ENCODE measurements at regions of chr5 and their contacts with region 1.

Region 1: DNA sequence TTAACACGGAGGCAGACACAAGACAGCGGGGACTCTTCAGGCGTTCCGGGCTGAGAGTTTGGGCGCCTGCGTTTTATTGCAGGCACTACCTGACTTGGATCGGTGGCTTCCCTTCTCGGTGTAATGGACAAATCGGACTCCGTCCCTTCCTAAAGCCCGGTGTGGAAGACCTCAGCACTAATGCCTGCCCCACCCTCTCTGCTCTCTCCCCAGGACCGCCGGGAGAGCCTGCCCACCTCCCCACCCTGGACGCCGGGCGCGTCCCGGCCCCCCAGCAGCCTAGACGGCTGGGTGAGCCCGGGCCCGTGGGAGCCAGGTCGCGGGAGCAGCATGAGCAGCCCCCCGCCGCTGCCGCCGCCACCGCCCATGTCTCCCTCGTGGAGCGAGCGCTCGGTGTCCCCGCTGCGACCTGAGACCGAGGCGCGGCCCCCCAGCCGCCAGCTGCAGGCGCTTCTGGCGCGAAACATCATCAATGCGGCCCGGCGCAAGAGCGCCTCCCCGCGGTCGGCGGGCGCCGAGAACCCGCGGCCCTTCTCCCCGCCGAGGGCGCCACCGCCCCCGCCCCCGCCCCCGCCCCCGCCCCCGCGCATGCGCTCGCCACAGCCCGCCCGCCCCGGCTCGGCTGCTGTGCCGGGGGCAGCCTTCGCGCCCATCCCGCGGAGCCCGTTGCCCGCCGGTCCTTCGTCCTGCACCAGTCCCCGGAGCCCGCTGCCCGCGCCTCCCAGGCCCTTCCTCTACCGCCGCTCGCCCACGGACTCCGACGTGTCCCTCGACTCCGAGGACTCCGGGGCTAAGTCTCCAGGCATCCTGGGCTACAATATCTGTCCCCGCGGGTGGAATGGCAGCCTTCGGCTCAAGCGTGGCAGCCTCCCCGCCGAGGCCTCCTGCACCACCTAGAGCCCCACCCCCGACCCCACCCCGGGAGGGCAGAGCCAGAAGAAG is 4.6 kb upstream of the MYOZ3 start:
- DNase-seq: peak; percentile 74 to 87
- ATAC-seq: peak; percentile 50 to 77 (median 56)
- H3K4me3 ChIP-seq: peak overlapping the region; percentile 10 to 64 (median 51)
- H3K27ac ChIP-seq: peak overlapping the region; percentile 79 to 100 (median 92)
- H3K4me1 ChIP-seq: peaks cover 21 to 94% (median 56%) of the 10 kb centered on the region in 9 donors
- H3K27me3 ChIP-seq: no peaks in the 10 kb centered on the region
- CTCF ChIP-seq: peak; percentile 59 to 89 (median 77)

Region 2: DNA sequence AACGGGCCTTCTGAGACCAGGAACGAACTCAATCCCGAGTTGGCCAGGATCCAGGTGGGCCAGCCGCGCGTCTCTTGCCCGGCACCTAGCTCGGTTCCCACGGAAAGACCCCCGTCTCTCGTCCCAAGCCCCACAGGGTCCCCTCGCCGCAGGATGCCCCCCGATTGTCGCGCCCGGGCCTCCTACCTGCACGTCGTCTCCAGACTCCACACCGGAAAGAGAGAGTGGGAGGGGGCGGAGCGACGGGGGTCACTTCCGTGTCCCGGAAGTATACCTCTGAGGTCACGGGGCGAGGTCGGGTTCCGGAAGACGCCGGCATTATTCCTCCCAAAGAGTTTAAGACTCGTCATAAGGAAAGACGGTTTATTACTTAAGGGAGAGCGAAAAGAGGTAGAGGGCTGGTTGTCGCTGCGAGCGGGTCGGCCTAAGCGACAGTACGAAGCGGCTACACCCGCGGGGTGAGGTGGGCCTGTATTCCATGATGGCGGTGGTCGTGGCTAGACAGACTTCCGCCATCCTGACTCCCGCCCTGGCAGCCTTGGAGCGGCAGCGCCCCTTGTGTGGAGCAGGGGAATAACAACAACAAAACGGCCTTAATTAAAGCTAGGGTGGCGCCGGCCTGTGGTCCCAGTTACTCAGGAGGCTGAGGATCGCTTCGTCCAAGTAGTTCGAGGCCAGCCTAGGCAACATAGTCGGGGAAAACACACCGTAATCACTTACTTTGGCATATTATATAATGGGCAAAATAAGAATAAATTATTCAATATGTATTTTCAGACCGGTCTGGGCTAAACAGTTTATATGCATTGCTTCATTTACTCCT is 206.7 kb before region 1 on chr5 and contains the start of gene RPS14:
- intact Hi-C with region 1: loop called in 2 of 10 experiments (anchors 10 kb)
- DNase-seq: peak; percentile 92 to 94
- ATAC-seq: peak; percentile 96 to 99 (median 98)
- H3K4me3 ChIP-seq: peak within 1 kb of the TSS; percentile 45 to 97 (median 84)
- H3K27ac ChIP-seq: peak within 1 kb of the TSS; percentile 89 to 99 (median 97)
- H3K4me1 ChIP-seq: peaks cover 7 to 47% (median 18%) of the 10 kb centered on the region in 9 donors
- H3K27me3 ChIP-seq: no peaks in the 10 kb centered on the region
- CTCF ChIP-seq: peak; percentile 89 to 97 (median 92)
- total RNA-seq, gene RPS14: 984 to 1,344 (median 1,239) TPM

Region 3: DNA sequence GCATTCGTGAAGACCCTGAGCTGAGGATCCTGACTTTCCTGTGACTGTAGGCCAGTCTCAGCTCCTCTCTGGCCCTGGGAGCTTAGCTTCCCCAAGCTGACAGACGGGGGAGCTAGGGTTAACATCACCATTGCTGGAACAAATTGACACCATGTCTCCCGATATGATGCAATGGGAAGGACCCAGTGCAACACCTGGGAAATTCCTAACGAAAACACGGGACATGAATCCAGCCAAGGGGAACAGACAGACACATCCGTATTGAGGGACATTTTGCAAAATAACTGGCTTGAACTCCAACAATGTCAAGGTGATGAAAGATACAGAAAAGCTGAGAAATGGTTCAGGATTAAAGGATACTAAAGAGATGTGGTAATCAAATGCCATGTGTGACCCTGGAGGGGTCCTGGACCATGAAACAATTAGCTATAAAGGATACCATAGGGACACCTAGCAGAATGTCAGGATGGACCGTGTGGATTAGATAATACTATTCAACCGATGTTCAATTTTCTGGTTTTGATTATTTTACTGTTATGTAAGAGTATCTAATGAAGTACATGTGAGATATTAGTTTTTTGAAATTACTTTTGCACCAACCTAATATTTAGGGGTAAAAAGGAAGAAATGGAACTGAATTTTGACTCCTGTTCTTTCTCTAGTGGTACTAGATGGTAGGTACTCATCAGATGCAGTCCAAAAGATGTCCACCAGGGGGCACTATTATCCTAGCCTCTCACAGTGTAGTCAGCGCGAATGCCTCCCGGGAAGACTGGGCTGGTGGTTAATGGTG is 95.9 kb before region 1 on chr5:
- intact Hi-C with region 1: loop called in 9 of 10 experiments (anchors 1 to 5 kb)
- DNase-seq: peak in 1 of 2 donors; percentile 91
- ATAC-seq: peak; percentile 78 to 91 (median 87)
- H3K4me3 ChIP-seq: no peak overlapping the region
- H3K27ac ChIP-seq: peak overlapping the region in 1 of 10 donors; percentile 0
- H3K4me1 ChIP-seq: peaks cover 0 to 29% (median 8%) of the 10 kb centered on the region in 9 donors
- H3K27me3 ChIP-seq: no peaks in the 10 kb centered on the region
- CTCF ChIP-seq: peak; percentile 88 to 97 (median 95)

Region 4: GRCh38 chr5:150589871-150590601 is 66.4 kb before region 1 on chr5:
- intact Hi-C with region 1: loop called in 8 of 10 experiments (anchors 1 to 10 kb)
- DNase-seq: peak; percentile 72 to 83
- ATAC-seq: peak; percentile 65 to 90 (median 83)
- H3K4me3 ChIP-seq: no peak overlapping the region
- H3K27ac ChIP-seq: peak overlapping the region in 9 of 10 donors; percentile 3 to 90 (median 74)
- H3K4me1 ChIP-seq: peaks cover 34 to 65% (median 58%) of the 10 kb centered on the region in 9 donors
- H3K27me3 ChIP-seq: no peaks in the 10 kb centered on the region
- CTCF ChIP-seq: peak; percentile 71 to 94 (median 82)

Region 5: GRCh38 chr5:150630461-150631335 is 25.8 kb before region 1 on chr5:
- intact Hi-C with region 1: loop called in 1 of 10 experiments (anchors 2 kb)
- DNase-seq: peak; percentile 77 to 80
- ATAC-seq: peak; percentile 29 to 87 (median 72)
- H3K4me3 ChIP-seq: no peak overlapping the region
- H3K27ac ChIP-seq: peak overlapping the region; percentile 53 to 100 (median 90)
- H3K4me1 ChIP-seq: peaks cover 35 to 95% (median 83%) of the 10 kb centered on the region in 9 donors
- H3K27me3 ChIP-seq: peaks cover 0 to 4% (median 0%) of the 10 kb centered on the region in 7 donors
- CTCF ChIP-seq: no peak

Measured in heart right ventricle (tissue), 16 donors.